HCT116 (cell line): ENCODE measurements at regions of chr5 and their contacts with region 1.

Region 1: DNA sequence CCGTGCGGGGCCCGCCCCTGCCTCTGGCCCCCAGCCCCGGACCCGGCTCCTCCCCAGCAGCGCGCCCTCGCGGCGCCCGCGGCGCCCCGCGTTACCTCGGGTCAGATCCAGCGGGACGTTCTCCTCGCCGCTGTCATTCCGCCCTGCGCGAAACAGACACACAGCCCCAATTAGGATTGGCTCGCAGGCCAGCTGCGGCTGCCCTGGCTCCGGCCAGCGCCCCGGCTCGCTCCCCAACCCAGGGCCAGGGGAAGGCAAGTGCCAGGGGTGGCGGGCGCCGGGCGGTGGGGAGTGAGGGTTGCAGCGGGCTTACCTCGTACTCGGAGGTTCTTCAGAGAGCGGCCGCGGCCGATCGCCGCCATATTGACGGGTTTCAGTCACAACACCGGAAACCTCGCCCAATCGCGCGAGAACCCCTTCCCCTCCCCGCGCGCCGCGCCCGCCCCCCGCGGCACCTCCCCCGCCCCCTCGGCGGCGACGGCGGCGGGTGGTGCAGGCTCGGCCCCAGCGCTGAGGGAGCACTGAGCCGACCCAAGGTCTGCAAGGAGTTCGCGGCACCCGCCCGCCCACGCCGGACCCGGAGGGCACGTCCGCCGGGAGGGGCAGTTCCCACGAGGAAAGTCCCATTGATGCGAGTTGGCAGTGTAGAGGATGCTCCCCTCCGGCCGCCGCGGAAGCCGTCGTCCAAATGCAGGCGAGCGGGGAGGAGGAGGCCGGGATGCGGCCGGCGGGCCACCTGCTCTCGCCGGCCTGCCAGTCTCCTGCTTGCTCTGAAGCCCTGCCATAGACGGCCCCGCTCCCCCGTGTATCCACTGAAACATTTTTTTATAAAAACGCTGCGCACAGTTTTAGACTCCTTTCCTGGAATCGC is at the start of gene RICTOR:
- DNase-seq: no peak
- ATAC-seq: peak; percentile 85
- H3K4me3 ChIP-seq: peak within 1 kb of the TSS; percentile 82 to 87
- H3K27ac ChIP-seq: peak within 1 kb of the TSS; percentile 80
- H3K4me1 ChIP-seq: peaks cover 7 to 37% of the 10 kb centered on the region in 2 experiments; a peak in 3 of 4 replicates
- H3K27me3 ChIP-seq: no peaks in the 10 kb centered on the region
- CTCF ChIP-seq: no peak
- POLR2A ChIP-seq: no peak
- RAD21 ChIP-seq: no peak
- total RNA-seq, gene RICTOR: 21.7 TPM

Region 2: GRCh38 chr5:38845526-38846378 is 228.5 kb before region 1 on chr5 and contains the start of gene OSMR:
- CTCF ChIA-PET with region 1: no interaction called
- POLR2A ChIA-PET with region 1: no interaction called
- RAD21 ChIA-PET with region 1: no interaction called
- intact Hi-C with region 1: loop called (anchors 5 kb)
- DNase-seq: peak; percentile 78
- ATAC-seq: peak; percentile 90
- H3K4me3 ChIP-seq: peak within 1 kb of the TSS; percentile 61 to 90
- H3K27ac ChIP-seq: peak within 1 kb of the TSS; percentile 91
- H3K4me1 ChIP-seq: peaks cover 23 to 29% of the 10 kb centered on the region in 2 experiments
- H3K27me3 ChIP-seq: no peaks in the 10 kb centered on the region
- CTCF ChIP-seq: no peak
- POLR2A ChIP-seq: peak; percentile 16
- RAD21 ChIP-seq: no peak
- total RNA-seq, gene OSMR: 46.0 TPM

Region 3: DNA sequence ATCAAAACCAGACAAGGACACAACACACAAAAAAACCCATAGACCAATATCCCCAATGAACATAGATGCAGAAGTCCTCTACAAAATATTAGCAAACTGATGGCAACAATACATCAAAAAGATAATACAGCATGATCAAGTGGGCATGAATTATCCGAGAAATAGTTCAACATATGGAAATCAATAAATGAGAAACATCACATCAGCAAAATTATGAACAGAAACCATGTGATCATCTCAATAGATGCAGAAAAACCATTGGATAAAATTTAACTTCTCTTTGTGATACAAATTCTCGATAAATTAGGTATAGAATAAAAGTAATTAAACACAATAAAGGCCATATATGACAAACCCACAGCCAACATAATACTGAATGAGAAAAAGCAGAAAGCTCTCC is 220.5 kb after region 1 on chr5:
- CTCF ChIA-PET with region 1: no interaction called
- POLR2A ChIA-PET with region 1: no interaction called
- RAD21 ChIA-PET with region 1: no interaction called
- intact Hi-C with region 1: no loop called
- DNase-seq: no peak
- ATAC-seq: no peak
- H3K4me3 ChIP-seq: no peak overlapping the region
- H3K27ac ChIP-seq: no peak overlapping the region
- H3K4me1 ChIP-seq: no peaks in the 10 kb centered on the region
- H3K27me3 ChIP-seq: no peaks in the 10 kb centered on the region
- CTCF ChIP-seq: no peak
- POLR2A ChIP-seq: no peak
- RAD21 ChIP-seq: no peak

Region 4: GRCh38 chr5:39314591-39314990 is 240.3 kb after region 1 on chr5:
- CTCF ChIA-PET with region 1: no interaction called
- POLR2A ChIA-PET with region 1: no interaction called
- RAD21 ChIA-PET with region 1: no interaction called
- intact Hi-C with region 1: no loop called
- DNase-seq: no peak
- ATAC-seq: no peak
- H3K4me3 ChIP-seq: no peak overlapping the region
- H3K27ac ChIP-seq: no peak overlapping the region
- H3K4me1 ChIP-seq: no peaks in the 10 kb centered on the region
- H3K27me3 ChIP-seq: no peaks in the 10 kb centered on the region
- CTCF ChIP-seq: no peak; a peak in 1 of 6 replicates
- POLR2A ChIP-seq: no peak
- RAD21 ChIP-seq: 0 out of 2 replicates have a peak, but pooled peaks have one; percentile 15